ENCODE measurements at regions of chr10 and their contacts with region 1.

Region 1: GRCh38 chr10:96910488-96911395 is 78.6 kb downstream of the LCOR start:
- DNase-seq: peak; percentile 8
- H3K4me3 ChIP-seq: no peak overlapping the region
- H3K27ac ChIP-seq: no peak overlapping the region
- H3K4me1 ChIP-seq: no peaks in the 10 kb centered on the region
- H3K27me3 ChIP-seq: no peaks in the 10 kb centered on the region
- CTCF ChIP-seq: peak; percentile 70 to 71

Region 2: DNA sequence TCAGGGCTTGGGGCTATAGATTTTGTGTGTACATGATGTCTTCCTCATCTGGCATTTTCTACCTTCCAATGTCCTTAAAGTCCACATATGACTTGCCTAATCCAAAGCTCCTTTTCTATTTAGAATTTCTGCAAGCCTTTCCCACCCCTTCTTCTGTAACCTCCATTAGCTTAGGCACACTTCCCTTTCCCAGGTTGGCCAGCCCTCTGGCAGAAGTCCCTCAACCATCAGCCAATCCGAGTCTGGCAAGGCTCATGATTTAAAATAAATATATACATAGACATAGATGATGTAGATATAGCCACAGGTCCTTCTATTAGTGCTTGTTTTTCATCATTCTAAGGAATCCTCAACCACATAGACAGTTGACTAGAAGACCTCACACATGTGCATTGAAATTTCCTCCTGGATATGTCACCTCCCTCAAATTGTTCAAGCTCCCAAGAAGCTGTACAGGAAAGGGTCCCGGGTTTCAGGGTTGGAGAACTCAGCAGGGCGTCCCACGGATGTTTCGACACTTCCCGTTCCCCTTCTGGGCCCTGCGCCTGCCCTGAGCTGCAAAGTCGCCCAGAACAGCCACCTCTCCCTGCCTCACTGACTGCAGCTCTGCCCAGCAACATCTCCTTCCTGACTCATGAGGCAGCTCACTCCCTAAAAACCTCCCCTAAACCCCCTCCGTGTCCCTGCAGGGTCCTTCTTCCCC is 170.0 kb before region 1 on chr10:
- CTCF ChIA-PET with region 1: no interaction called
- dilution Hi-C with region 1: no loop called
- in situ Hi-C with region 1: no loop called
- intact Hi-C with region 1: no loop called
- DNase-seq: no peak
- H3K4me3 ChIP-seq: no peak overlapping the region
- H3K27ac ChIP-seq: no peak overlapping the region
- H3K4me1 ChIP-seq: no peaks in the 10 kb centered on the region
- H3K27me3 ChIP-seq: no peaks in the 10 kb centered on the region
- CTCF ChIP-seq: no peak

Region 3: DNA sequence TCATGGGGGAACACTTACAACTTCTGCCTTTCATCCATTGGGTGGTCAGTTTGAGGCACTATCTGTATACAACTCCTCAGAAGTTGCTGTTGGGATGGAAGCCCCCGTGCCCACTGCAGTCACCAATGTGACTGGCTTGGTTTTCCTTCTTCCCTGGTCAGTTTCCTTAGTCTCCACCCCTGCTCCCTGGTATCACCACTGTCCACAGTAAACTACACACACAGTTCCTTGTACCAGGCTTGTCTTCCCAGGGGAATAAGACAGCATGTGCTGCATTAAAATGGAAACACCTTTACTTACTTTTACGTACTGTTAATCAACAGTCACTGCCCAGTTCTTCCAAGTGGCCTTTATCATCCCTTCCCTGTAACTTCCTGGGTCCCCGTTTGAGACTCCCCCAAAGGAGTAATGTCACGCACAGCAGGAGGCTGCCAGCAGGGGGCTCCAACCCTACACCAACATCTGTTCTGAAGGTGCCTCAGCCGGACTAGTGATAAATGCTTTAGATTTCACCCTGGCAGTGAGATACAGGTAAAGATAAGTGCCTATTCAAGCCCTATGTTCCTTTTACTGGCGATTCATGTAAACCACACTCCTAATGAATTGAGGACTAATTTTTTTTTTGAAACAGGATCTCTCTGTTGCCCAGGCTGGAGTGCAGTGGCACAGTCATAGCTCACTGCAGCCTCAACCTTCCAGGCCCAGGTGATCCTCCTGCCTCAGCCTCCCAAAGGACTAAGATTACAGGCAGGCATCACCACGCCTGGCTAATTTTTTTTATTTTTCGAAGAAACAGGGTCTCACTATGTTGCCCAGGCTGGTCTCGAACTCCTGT is 145.1 kb before region 1 on chr10:
- CTCF ChIA-PET with region 1: no interaction called
- dilution Hi-C with region 1: no loop called
- in situ Hi-C with region 1: no loop called
- intact Hi-C with region 1: loop called (anchors 1 kb)
- DNase-seq: peak; percentile 47
- H3K4me3 ChIP-seq: no peak overlapping the region
- H3K27ac ChIP-seq: no peak overlapping the region
- H3K4me1 ChIP-seq: no peaks in the 10 kb centered on the region
- H3K27me3 ChIP-seq: no peaks in the 10 kb centered on the region
- CTCF ChIP-seq: peak; percentile 86 to 91

Region 4: GRCh38 chr10:96930469-96930868 is 19.7 kb after region 1 on chr10:
- CTCF ChIA-PET with region 1: no interaction called
- dilution Hi-C with region 1: no loop called
- in situ Hi-C with region 1: no loop called
- intact Hi-C with region 1: no loop called
- DNase-seq: no peak
- H3K4me3 ChIP-seq: no peak overlapping the region
- H3K27ac ChIP-seq: no peak overlapping the region
- H3K4me1 ChIP-seq: no peaks in the 10 kb centered on the region
- H3K27me3 ChIP-seq: no peaks in the 10 kb centered on the region
- CTCF ChIP-seq: no peak